Mammary epithelial cell (primary cell): ENCODE measurements at regions of chr6 and their contacts with region 1.

Region 1: GRCh38 chr6:170224694-170225660 is 65.9 kb downstream of the DLL1 start:
- DNase-seq: peak; percentile 98
- H3K4me3 ChIP-seq: peak overlapping the region in 1 of 3 experiments; percentile 14
- H3K27ac ChIP-seq: peak overlapping the region; percentile 92
- H3K4me1 ChIP-seq: peaks cover 58% of the 10 kb centered on the region
- H3K27me3 ChIP-seq: no peaks in the 10 kb centered on the region
- CTCF ChIP-seq: peak; percentile 13 to 15

Region 2: DNA sequence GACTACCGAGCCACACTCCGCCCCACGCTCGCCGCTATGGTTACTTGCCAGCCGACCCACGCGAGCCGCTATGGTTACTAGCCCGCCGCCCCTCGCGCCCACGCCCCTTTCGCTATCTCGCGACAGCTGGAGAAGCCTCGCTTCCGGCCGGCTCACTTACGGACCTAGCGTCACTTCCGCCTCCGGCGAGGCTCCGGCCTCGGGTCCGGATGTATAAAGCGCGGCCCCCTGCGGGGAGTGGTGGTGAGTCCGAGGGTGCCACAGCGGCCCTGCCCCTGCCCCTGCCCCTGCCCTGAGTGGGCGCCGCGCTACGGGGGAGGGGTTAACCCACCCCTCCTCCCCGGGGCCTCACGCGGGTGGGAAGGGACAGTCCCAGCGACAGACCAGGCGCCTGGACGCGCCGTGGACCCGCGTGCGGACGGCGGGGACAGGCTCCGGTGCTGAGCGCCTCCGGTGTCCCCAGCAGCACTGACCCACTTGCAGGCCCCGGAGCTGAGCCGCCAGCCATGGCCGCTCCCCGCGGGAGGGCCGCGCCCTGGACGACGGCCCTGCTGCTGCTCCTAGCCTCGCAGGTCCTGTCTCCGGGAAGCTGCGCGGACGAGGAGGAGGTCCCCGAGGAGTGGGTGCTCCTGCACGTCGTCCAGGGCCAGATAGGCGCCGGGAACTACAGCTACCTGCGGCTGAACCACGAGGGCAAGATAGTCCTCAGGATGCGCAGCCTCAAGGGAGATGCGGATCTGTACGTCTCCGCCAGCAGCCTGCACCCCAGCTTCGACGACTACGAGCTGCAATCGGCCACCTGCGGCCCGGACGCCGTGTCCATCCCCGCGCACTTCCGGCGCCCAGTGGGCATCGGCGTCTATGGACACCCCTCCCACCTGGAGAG is 522.8 kb before region 1 on chr6 and contains the starts of genes C6orf120 and WDR27:
- CTCF ChIA-PET with region 1: no interaction called
- dilution Hi-C with region 1: no loop called
- in situ Hi-C with region 1: no loop called
- intact Hi-C with region 1: loop called (anchors 10 kb)
- DNase-seq: peak; percentile 95
- H3K4me3 ChIP-seq: peak within 1 kb of the TSS; percentile 77 to 95 (median 80)
- H3K27ac ChIP-seq: peak within 1 kb of the TSS; percentile 80
- H3K4me1 ChIP-seq: peaks cover 33% of the 10 kb centered on the region
- H3K27me3 ChIP-seq: no peaks in the 10 kb centered on the region
- CTCF ChIP-seq: no peak
- total RNA-seq, gene C6orf120: 22.0 to 26.0 TPM
- total RNA-seq, gene WDR27: 21.7 to 50.2 TPM

Region 3: GRCh38 chr6:169978615-169979513 is 246.1 kb before region 1 on chr6:
- CTCF ChIA-PET with region 1: no interaction called
- dilution Hi-C with region 1: no loop called
- in situ Hi-C with region 1: no loop called
- intact Hi-C with region 1: loop called (anchors 5 kb)
- DNase-seq: peak; percentile 92
- H3K4me3 ChIP-seq: no peak overlapping the region
- H3K27ac ChIP-seq: peak overlapping the region; percentile 55
- H3K4me1 ChIP-seq: peaks cover 39% of the 10 kb centered on the region
- H3K27me3 ChIP-seq: peaks cover 2% of the 10 kb centered on the region
- CTCF ChIP-seq: peak in 1 of 2 donors; percentile 23

Region 4: DNA sequence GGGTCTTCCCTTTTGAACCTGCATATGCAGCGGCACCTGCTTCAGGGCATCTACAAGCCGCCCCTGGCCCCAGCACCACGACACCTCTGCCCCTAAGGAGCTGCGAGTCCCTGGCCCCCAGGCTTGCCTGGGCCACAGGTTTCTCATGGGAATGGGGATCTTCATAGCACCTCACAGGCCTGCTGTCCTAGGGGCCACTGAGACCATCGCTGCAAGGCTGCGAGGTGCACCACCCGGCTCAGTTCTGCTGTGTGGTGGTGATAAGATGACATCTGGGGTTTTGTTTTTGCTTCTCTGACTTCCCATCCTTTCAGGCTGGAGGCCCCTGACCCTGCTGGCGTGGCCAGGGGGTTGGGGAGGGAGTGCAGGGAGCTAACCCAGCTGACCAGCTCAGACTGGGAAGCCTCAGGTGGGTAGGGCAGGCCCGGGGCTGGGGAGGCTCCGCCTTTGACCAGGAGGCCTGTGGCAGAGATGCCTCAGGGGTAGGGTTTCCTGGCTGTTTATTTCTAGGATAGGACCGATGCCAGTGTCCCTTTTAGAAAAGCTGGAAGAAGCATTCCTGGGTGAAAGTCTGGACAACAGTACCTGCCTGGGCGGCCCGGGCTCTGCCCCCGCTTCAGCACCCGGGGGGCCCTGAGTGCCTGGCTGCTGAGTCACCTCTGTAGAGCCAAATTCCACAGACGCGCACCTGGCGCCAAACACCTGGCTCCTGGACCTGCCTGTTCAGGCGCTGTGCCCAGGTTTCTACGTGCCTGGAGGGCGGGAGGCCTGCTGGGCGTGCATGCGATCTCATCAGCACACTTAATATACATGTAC is 198.8 kb before region 1 on chr6:
- CTCF ChIA-PET with region 1: no interaction called
- dilution Hi-C with region 1: no loop called
- in situ Hi-C with region 1: no loop called
- intact Hi-C with region 1: loop called (anchors 1 kb)
- DNase-seq: peak; percentile 96
- H3K4me3 ChIP-seq: no peak overlapping the region
- H3K27ac ChIP-seq: peak overlapping the region; percentile 74
- H3K4me1 ChIP-seq: peaks cover 25% of the 10 kb centered on the region
- H3K27me3 ChIP-seq: no peaks in the 10 kb centered on the region
- CTCF ChIP-seq: no peak

Region 5: GRCh38 chr6:170129691-170130171 is 95.2 kb before region 1 on chr6:
- CTCF ChIA-PET with region 1: no interaction called
- dilution Hi-C with region 1: no loop called
- in situ Hi-C with region 1: no loop called
- intact Hi-C with region 1: loop called (anchors 5 kb)
- DNase-seq: peak; percentile 42
- H3K4me3 ChIP-seq: no peak overlapping the region
- H3K27ac ChIP-seq: no peak overlapping the region
- H3K4me1 ChIP-seq: peaks cover 8% of the 10 kb centered on the region
- H3K27me3 ChIP-seq: no peaks in the 10 kb centered on the region
- CTCF ChIP-seq: no peak

Region 6: DNA sequence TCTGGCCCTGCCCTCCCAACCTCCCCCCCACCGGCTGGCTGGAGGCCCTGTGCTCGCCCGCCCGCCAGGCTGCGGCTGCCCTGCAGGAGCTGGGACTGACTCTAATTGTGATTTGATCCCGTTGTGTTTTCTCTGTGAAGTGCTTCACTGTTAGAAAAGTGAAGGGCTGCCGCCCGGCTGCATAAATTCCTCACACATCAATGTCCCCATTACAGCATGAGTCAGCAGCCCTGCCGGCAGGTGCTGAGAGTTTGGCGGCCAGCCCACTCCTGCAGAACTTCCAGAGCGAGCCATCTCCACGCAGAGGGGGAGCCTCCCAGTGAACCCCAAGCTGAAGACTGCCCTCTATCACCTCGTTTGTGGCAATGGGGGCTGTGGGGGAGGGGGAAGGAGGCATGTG is 72.0 kb before region 1 on chr6:
- CTCF ChIA-PET with region 1: no interaction called
- dilution Hi-C with region 1: no loop called
- in situ Hi-C with region 1: no loop called
- intact Hi-C with region 1: loop called (anchors 5 kb)
- DNase-seq: peak; percentile 49
- H3K4me3 ChIP-seq: no peak overlapping the region
- H3K27ac ChIP-seq: no peak overlapping the region
- H3K4me1 ChIP-seq: peaks cover 12% of the 10 kb centered on the region
- H3K27me3 ChIP-seq: no peaks in the 10 kb centered on the region
- CTCF ChIP-seq: no peak

Region 7: GRCh38 chr6:170178561-170179477 is 46.2 kb before region 1 on chr6:
- CTCF ChIA-PET with region 1: no interaction called
- dilution Hi-C with region 1: no loop called
- in situ Hi-C with region 1: no loop called
- intact Hi-C with region 1: loop called (anchors 1 kb)
- DNase-seq: peak; percentile 69
- H3K4me3 ChIP-seq: no peak overlapping the region
- H3K27ac ChIP-seq: no peak overlapping the region
- H3K4me1 ChIP-seq: peaks cover 17% of the 10 kb centered on the region
- H3K27me3 ChIP-seq: no peaks in the 10 kb centered on the region
- CTCF ChIP-seq: no peak